ENCODE measurements at regions of chr2 and their contacts with region 1.

Region 1: DNA sequence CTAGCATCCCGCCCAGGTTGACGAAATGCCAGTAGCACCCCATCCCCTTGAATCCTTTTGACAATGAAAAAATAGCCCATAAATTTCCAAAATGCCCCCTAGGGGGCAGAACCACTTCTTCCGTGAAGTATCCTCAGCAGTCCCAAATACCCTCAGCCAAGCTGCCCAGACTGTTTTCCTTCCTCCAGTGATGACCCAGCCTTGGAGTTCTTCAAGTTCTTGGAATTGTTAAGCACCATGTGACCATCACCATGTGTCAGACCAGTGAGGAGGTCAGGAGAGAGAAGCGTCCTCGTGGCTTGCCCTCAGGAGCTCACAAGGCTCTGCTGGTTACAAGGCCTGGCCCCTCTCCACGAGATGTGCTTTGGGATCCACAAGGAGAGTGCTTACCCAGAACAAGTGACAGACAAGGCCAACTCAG is 1.4 kb upstream of the SLC23A3 start:
- DNase-seq: peak; percentile 61 to 89 (median 83)
- H3K4me3 ChIP-seq: no peak overlapping the region
- H3K27ac ChIP-seq: peak overlapping the region in 4 of 5 donors; percentile 62 to 85 (median 70)
- H3K4me1 ChIP-seq: peaks cover 7 to 22% of the 10 kb centered on the region in 2 donors
- H3K27me3 ChIP-seq: no peaks in the 10 kb centered on the region
- CTCF ChIP-seq: peak; percentile 55 to 69 (median 62)
- POLR2A ChIP-seq: peak in 1 of 2 donors; percentile 53

Region 2: GRCh38 chr2:219209236-219210195 is 38.3 kb after region 1 on chr2:
- intact Hi-C with region 1: loop called (anchors 5 to 10 kb)
- DNase-seq: peak in 1 of 7 donors; percentile 18
- H3K4me3 ChIP-seq: no peak overlapping the region
- H3K27ac ChIP-seq: no peak overlapping the region
- H3K4me1 ChIP-seq: peaks cover 7 to 14% of the 10 kb centered on the region in 2 donors
- H3K27me3 ChIP-seq: no peaks in the 10 kb centered on the region
- CTCF ChIP-seq: no peak
- POLR2A ChIP-seq: no peak